AG04449 (cell line): ENCODE measurements at regions of chr10 and their contacts with region 1.

Region 1: GRCh38 chr10:13536674-13537366 is 8.0 kb upstream of the BEND7 start:
- DNase-seq: no peak
- H3K4me3 ChIP-seq: no peak overlapping the region
- CTCF ChIP-seq: peak; percentile 72

Region 2: DNA sequence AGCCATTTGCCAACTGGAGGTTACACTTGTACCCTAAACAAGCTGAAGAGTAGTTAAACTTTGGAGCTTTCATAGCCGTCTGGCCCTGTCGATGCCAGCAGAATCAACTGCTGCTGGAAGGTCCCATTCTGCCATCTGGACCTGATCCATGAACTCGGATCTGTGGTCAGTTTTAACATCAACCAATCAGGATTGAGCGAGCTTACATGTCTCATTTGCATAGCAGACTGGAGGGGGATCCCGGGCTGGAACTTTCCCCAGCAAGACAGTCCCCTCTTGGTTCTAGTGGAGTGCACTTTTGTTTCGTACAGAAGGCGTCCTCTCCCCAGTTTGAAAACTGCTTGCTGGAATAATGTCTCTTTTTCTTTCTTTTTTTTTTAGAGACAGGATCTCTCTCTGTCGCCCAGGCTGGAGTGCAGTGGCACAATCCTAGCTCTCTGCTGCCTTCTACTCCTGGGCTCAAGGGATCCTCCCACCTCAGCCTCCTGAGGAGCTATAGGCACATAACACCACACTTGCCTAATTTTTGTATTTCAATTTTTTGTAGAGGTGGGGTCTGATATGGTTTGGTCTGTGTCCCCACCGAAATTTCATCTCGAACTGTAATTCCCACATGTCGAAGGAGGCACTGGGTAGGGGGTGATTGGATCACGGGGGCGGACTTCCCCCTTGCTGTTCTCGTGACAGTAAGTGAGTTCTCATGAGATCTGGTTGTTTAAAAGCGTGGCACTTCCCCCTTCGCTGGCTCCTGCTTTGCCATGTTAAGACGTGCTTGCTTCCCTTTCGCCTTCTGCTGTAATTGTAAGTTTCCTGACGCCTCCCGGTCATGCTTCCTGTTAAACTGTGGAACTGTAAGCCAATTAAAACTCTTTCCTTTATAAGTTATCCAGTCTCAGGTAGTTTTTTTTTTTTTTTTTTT is 146.0 kb before region 1 on chr10:
- CTCF ChIA-PET with region 1: no interaction called
- POLR2A ChIA-PET with region 1: no interaction called
- DNase-seq: no peak
- H3K4me3 ChIP-seq: no peak overlapping the region
- CTCF ChIP-seq: no peak

Region 3: DNA sequence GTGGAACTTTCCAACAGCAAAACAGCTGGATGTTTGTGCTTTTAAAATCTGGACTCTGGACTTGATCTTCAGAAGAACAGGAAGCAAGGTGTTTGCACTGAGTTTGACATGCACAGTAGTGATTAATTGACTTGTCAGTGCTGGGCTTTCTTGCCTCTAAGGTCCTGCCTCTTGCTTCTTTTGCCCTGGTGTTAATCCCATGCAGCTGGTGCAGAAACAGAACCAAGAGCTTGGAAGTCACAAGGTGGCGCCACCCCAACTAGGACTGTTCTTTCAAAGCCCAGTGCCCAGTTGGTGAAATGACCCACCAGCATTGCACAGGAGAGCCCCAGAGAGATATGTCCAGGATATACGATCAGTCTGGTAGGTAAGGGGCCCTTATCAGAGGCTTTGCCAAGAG is 121.9 kb before region 1 on chr10:
- CTCF ChIA-PET with region 1: interaction called, 15 read pairs
- POLR2A ChIA-PET with region 1: no interaction called
- DNase-seq: no peak
- H3K4me3 ChIP-seq: no peak overlapping the region
- CTCF ChIP-seq: peak; percentile 38

Region 4: DNA sequence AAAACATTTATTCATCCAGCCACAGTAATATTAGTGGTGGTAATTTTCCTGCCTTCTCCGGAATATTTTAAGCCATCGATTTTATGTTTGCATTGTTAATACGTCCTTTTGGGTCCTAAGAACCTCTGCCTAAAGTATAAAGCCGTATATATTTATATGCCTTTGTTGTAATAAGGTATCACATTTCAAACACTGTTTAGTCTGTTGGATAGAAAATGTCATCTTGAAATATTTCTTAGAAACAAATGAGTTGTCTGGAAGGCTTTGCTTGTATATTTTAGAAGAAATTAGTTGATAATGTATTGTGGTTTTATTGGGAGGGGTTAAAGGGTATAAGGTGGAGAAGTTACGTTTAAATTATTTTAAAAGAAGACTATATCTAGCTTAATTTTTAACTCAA is 61.1 kb after region 1 on chr10:
- CTCF ChIA-PET with region 1: no interaction called
- POLR2A ChIA-PET with region 1: no interaction called
- DNase-seq: no peak
- H3K4me3 ChIP-seq: no peak overlapping the region
- CTCF ChIP-seq: no peak